ENCODE measurements at regions of chr1 and their contacts with region 1.

Region 1: DNA sequence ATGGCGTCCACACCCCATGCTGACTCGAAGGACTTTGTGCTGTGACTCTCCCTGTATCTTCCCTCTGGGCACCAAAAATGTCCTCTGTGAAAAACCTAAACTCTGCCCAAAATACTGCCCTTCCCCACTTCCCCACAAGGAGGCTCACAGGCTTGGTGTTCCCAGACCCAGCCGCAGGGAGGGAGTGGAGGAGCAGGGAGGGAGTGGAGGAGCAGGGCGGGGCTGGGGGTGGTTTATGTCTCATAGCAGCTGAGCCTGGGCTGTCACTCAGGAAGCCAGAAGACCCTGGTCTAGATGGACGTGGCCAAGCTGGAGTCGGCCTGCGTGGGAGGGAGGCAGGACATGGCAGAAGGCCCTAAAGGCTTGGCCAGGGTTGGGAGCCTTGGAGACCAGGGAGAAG is 461.7 kb downstream of the PTPRU start:
- ATAC-seq: peak; percentile 63 to 98 (median 86)
- H3K4me3 ChIP-seq: no peak overlapping the region
- H3K27ac ChIP-seq: no peak overlapping the region
- H3K4me1 ChIP-seq: peaks cover 16 to 28% of the 10 kb centered on the region in 2 donors

Region 2: DNA sequence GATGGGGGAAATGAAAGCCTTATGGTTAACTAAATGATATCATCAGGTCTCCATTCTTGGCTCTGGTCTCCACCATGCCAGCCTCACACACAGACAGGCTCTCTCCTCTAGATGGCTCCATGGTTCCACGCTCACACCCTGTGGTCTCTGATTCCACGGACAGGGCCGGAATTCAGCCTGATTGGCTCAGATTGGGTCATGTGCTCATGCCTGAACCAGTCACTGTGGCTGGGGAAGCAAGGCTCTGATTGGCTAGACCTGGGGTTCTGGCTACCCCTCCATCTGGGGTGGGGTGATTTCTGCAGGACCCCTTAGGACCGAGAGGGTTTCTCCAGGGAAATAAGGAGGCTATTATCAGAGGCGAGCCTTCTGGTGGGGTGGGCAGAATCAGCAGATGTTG is 184.7 kb before region 1 on chr1:
- in situ Hi-C with region 1: loop called in 1 of 9 experiments (anchors 25 kb)
- ATAC-seq: peak; percentile 97 to 100 (median 100)
- H3K4me3 ChIP-seq: no peak overlapping the region
- H3K27ac ChIP-seq: no peak overlapping the region
- H3K4me1 ChIP-seq: peaks cover 0 to 4% of the 10 kb centered on the region in 2 donors

Region 3: GRCh38 chr1:29590583-29591565 is 107.2 kb before region 1 on chr1:
- in situ Hi-C with region 1: no loop called
- ATAC-seq: no peak
- H3K4me3 ChIP-seq: no peak overlapping the region
- H3K27ac ChIP-seq: no peak overlapping the region
- H3K4me1 ChIP-seq: no peaks in the 10 kb centered on the region

Region 4: GRCh38 chr1:29824511-29825273 is 126.7 kb after region 1 on chr1:
- in situ Hi-C with region 1: no loop called
- ATAC-seq: peak in 6 of 8 experiments; percentile 51 to 88 (median 76)
- H3K4me3 ChIP-seq: no peak overlapping the region
- H3K27ac ChIP-seq: peak overlapping the region in 1 of 2 donors; percentile 12
- H3K4me1 ChIP-seq: peaks cover 0 to 10% of the 10 kb centered on the region in 2 donors